ENCODE measurements at regions of chr6 and their contacts with region 1.

Region 1: DNA sequence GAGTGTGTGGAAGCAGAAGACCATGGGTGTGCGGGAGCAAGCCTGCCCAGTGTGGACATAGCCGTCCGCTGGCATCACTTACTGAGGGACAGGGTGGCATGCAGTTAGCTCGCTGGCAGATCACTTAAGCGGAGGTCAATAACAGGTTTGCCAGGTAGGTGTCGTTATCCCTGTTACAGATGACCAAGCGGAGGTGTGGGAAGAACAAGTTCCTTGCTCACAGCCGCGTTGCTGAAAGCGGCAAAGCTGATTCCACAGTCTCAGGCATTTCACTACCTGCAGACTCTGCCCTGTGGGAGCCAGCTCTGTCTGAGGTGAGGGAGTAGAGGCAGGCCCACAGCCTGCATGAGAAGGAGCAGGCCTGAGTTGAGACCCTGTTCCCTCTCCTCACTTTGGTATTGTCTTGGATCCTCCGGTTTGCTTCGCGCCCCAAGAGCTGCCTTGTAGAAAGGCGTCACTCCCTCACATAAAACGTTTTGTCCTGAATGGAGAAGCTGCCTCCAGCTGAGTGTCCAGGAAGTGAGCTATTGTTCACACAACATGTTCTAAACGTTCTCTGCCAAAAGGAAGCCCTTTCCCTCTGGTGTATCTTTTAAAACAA is 96.9 kb downstream of the TCP11 start:
- DNase-seq: peak; percentile 96
- H3K4me3 ChIP-seq: peak overlapping the region; percentile 1
- H3K27ac ChIP-seq: peak overlapping the region; percentile 81
- H3K4me1 ChIP-seq: peaks cover 59% of the 10 kb centered on the region
- H3K27me3 ChIP-seq: no peaks in the 10 kb centered on the region
- CTCF ChIP-seq: no peak

Region 2: GRCh38 chr6:34370361-34370760 is 673.9 kb before region 1 on chr6:
- CTCF ChIA-PET with region 1: no interaction called
- POLR2A ChIA-PET with region 1: no interaction called
- intact Hi-C with region 1: no loop called
- DNase-seq: no peak
- H3K4me3 ChIP-seq: no peak overlapping the region
- H3K27ac ChIP-seq: no peak overlapping the region
- H3K4me1 ChIP-seq: no peaks in the 10 kb centered on the region
- H3K27me3 ChIP-seq: no peaks in the 10 kb centered on the region
- CTCF ChIP-seq: no peak

Region 3: GRCh38 chr6:36399970-36400369 is 1355.7 kb after region 1 on chr6:
- CTCF ChIA-PET with region 1: no interaction called
- POLR2A ChIA-PET with region 1: interaction called, 15 read pairs
- intact Hi-C with region 1: no loop called
- DNase-seq: no peak
- H3K4me3 ChIP-seq: no peak overlapping the region
- H3K27ac ChIP-seq: no peak overlapping the region
- H3K4me1 ChIP-seq: no peaks in the 10 kb centered on the region
- H3K27me3 ChIP-seq: no peaks in the 10 kb centered on the region
- CTCF ChIP-seq: no peak

Measured in A673 (cell line).